Right ventricle myocardium superior (tissue), 1 donor: ENCODE measurements at regions of chr12 and their contacts with region 1.

Region 1: DNA sequence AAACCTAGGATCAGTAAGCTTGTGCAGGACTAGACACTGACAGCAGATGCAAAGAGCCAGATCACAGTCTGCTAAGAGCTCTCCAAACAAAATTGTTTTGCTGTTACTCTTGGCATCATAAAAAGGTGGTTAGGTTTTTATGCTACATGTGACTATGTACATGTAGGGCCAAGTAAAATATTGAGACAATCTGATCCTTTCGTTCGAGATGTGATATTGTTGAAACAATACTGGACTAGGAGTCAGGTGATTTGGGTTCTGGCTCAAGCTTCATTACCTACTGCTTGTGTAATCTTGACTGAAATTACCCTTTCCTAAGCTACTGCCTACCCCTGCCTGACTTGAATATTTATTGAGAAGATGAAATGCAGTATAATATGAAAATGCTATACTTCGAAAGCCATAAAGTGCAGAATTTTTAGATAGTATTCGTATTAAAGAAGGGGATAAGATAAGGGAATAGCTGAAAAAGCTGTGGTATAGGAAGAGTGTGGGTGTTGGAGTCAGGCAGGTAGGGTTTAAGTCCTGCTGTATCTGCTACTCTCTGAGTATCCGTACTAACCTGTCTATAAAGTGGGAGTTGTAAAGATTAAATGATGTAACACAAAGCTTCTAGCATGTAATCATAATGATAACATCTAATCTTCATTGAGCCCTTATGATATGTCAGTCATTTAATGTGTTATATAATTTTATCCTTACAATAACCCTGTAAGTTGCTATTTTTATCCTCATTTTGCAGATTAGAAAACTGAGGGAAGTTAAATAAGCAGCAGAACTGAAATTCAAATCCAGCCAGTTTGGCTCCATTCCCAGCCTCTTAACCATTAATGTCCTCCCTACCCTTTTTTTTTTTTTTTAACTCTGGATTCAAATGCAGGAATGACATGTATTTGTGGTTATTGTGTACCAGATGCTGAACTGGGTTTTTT is 38.6 kb upstream of the ATF1 start:
- DNase-seq: no peak
- ATAC-seq: no peak

Region 2: GRCh38 chr12:50642035-50642451 is 83.2 kb before region 1 on chr12:
- intact Hi-C with region 1: loop called (anchors 10 kb)
- DNase-seq: no peak
- ATAC-seq: no peak